Pancreas (tissue), 10 donors: ENCODE measurements at regions of chr1 and their contacts with region 1.

Region 1: DNA sequence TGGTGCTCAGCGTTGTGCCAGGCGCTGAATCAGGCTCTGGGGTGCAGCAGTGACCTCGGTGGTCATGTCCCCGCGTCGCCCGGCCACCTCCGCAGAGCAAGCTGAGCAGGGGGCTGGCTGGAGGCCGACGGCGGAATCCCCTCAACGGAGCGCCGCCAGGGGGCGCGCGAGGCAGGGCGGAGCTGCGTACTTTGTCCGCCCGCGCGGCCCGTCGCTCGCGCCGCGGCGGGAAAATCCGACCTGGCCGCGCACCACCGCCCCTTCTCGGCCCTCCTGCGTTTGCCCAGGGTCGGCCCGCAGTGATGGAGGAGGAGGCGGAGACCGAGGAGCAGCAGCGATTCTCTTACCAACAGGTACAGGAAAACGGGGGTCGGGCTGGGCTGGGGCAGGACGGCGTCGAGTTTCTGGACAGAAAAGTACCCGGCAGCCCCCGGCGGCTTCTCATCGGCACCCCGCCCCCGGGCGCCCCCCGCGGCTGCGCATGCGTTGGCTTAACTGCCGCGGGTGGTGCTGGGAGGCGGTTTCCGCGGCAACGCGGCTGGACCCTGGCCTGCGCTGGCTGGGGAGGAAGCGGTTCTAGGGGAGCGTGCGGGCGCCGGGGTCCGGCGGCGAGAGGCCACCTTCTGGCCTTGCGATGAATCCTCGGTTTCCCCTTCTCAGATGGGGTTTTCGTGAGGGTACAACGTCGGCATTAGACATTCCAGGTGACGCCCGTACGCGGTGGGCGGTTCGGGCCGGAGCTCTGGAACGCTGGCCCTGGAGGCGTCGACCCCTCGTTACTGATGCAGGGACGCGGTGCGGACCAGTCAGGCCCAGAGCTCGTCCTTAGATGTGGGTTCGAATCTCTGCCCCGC is at the start of gene CENPS:
- DNase-seq: peak; percentile 88 to 98 (median 94)
- ATAC-seq: peak; percentile 95 to 98 (median 98)
- H3K4me3 ChIP-seq: peak within 1 kb of the TSS; percentile 49 to 83 (median 59)
- H3K27ac ChIP-seq: peak within 1 kb of the TSS in 1 of 4 donors; percentile 30
- H3K4me1 ChIP-seq: peaks cover 0 to 5% (median 5%) of the 10 kb centered on the region in 3 donors
- H3K27me3 ChIP-seq: no peaks in the 10 kb centered on the region
- CTCF ChIP-seq: peak; percentile 93 to 98 (median 97)
- total RNA-seq, gene CENPS: 4.7 to 9.3 (median 7.6) TPM

Region 2: GRCh38 chr1:10378081-10378841 is 52.2 kb before region 1 on chr1:
- intact Hi-C with region 1: loop called in 2 of 3 experiments (anchors 5 kb)
- DNase-seq: peak in 1 of 6 donors; percentile 24
- ATAC-seq: peak in 3 of 4 donors; percentile 35 to 78 (median 52)
- H3K4me3 ChIP-seq: no peak overlapping the region
- H3K27ac ChIP-seq: no peak overlapping the region
- H3K4me1 ChIP-seq: no peaks in the 10 kb centered on the region
- H3K27me3 ChIP-seq: no peaks in the 10 kb centered on the region
- CTCF ChIP-seq: no peak

Region 3: GRCh38 chr1:10494754-10495474 is 64.5 kb after region 1 on chr1:
- intact Hi-C with region 1: loop called in 1 of 3 experiments (anchors 5 kb)
- DNase-seq: peak; percentile 43 to 92 (median 72)
- ATAC-seq: peak; percentile 85 to 94 (median 91)
- H3K4me3 ChIP-seq: peak overlapping the region in 1 of 4 donors; percentile 30
- H3K27ac ChIP-seq: peak overlapping the region in 3 of 4 donors; percentile 30 to 70 (median 63)
- H3K4me1 ChIP-seq: peaks cover 0 to 10% (median 10%) of the 10 kb centered on the region in 3 donors
- H3K27me3 ChIP-seq: no peaks in the 10 kb centered on the region
- CTCF ChIP-seq: peak; percentile 91 to 94 (median 92)

Region 4: GRCh38 chr1:10714337-10715114 is 284.1 kb after region 1 on chr1:
- intact Hi-C with region 1: no loop called
- DNase-seq: peak; percentile 81 to 90 (median 82)
- ATAC-seq: peak; percentile 78 to 94 (median 88)
- H3K4me3 ChIP-seq: no peak overlapping the region
- H3K27ac ChIP-seq: peak overlapping the region; percentile 42 to 64 (median 46)
- H3K4me1 ChIP-seq: peaks cover 8 to 15% (median 9%) of the 10 kb centered on the region in 3 donors
- H3K27me3 ChIP-seq: no peaks in the 10 kb centered on the region
- CTCF ChIP-seq: no peak